Activated naive CD8-positive, alpha-beta T cell treated with anti-CD3 and anti-CD28 coated beads, Interleukin-2, amount 10 ng/mL, durations not matched to agents 7 days and 5 days (primary cell): ENCODE measurements at regions of chr6 and their contacts with region 1.

Region 1: GRCh38 chr6:25369433-25370181 is 90.4 kb downstream of the CARMIL1 start:
- DNase-seq: peak; percentile 38
- ATAC-seq: peak; percentile 18
- H3K4me3 Mint-ChIP-seq: peak overlapping the region; percentile 68
- H3K27ac Mint-ChIP-seq: peak overlapping the region; percentile 80
- H3K4me1 Mint-ChIP-seq: peaks cover 56% of the 10 kb centered on the region
- H3K27me3 Mint-ChIP-seq: no peaks in the 10 kb centered on the region

Region 2: DNA sequence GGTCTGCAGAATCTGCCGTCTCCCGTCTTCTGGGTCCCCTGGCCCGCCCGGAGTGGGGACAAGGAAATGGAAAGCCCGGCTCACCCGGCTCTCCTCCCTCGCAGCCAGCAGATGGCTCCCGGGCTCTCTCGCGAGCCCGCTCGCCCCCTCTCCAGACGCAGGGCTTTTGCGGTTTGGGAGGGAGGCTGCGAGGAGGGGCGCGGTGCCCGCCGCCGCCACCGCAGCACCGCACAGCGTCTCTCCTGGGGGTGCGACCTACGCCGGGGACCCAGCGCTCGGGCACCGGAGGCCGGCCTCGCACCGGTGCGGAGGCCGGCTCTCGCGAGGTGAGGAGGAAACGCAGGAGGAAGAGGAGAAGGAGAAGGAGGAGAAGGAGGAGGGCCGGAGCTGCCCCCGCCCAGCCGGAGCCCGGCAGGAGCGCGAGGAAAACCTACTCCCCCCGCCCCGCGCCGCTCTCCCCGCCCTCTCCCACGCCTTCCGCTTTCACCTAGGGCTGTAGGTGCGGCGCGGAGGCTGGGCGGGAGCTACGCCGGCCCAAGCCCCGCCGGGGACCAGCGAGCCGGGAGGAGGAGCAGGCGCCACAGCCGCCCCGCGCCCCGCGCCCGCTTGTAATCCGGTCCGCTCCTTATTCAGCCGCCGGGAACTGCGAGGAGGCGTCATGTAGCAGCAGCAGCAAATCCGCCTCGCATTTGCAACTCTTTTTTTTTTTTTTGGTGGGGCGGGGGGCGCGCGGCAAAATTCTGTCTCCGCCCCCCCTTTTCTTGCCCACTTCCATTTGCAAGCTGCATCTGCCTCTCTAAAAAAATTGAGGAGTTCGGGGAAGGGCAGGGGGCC is 90.5 kb before region 1 on chr6 and contains the start of gene CARMIL1:
- POLR2A ChIA-PET with region 1: interaction called, 17 read pairs
- DNase-seq: peak; percentile 82
- ATAC-seq: peak; percentile 87
- H3K4me3 Mint-ChIP-seq: peak within 1 kb of the TSS; percentile 84
- H3K27ac Mint-ChIP-seq: peak within 1 kb of the TSS; percentile 73
- H3K4me1 Mint-ChIP-seq: peaks cover 12% of the 10 kb centered on the region
- H3K27me3 Mint-ChIP-seq: peaks cover 3% of the 10 kb centered on the region
- total RNA-seq, gene CARMIL1: 6.0 to 6.8 TPM

Region 3: DNA sequence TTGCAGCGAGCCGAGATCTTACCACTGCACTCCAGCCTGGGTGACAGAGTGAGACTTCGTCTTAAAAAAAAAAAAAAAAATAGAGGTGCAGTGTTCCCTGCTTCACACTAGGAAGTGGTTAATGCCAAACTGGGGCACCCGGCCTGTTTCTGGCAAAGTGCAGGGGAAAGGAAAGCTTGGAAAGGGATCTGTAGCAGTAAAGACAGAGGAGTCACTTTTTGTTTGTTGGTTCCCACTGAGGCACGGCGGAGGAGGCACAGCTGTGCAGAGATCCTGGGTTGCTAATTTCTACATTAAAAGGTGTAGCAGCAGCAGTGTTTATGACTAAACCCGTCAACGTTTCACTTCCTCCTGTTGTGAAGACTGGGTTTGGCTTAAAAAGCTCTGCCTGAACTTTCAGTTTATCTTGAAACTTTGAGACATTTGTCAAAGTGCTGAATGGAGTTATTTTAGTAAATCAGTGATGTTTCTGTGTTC is 35.1 kb after region 1 on chr6:
- POLR2A ChIA-PET with region 1: interaction called, 29 read pairs
- DNase-seq: peak; percentile 64
- ATAC-seq: peak; percentile 93
- H3K4me3 Mint-ChIP-seq: no peak overlapping the region
- H3K27ac Mint-ChIP-seq: no peak overlapping the region
- H3K4me1 Mint-ChIP-seq: peaks cover 20% of the 10 kb centered on the region
- H3K27me3 Mint-ChIP-seq: no peaks in the 10 kb centered on the region